ENCODE measurements at regions of chr5 and their contacts with region 1.

Region 1: GRCh38 chr5:76256116-76256889 is 146.8 kb upstream of the IQGAP2 start:
- DNase-seq: peak; percentile 55 to 70 (median 64)
- H3K4me3 ChIP-seq: no peak overlapping the region
- H3K4me3 Mint-ChIP-seq: peak overlapping the region in 4 of 8 donors; percentile 17 to 70 (median 36)
- H3K27ac ChIP-seq: no peak overlapping the region
- H3K27ac Mint-ChIP-seq: peak overlapping the region in 1 of 7 donors; percentile 14
- H3K4me1 ChIP-seq: peaks cover 4% of the 10 kb centered on the region
- H3K4me1 Mint-ChIP-seq: peaks cover 6 to 9% (median 7%) of the 10 kb centered on the region in 4 donors
- H3K27me3 ChIP-seq: no peaks in the 10 kb centered on the region
- H3K27me3 Mint-ChIP-seq: peaks cover 0 to 6% of the 10 kb centered on the region in 2 donors

Region 2: DNA sequence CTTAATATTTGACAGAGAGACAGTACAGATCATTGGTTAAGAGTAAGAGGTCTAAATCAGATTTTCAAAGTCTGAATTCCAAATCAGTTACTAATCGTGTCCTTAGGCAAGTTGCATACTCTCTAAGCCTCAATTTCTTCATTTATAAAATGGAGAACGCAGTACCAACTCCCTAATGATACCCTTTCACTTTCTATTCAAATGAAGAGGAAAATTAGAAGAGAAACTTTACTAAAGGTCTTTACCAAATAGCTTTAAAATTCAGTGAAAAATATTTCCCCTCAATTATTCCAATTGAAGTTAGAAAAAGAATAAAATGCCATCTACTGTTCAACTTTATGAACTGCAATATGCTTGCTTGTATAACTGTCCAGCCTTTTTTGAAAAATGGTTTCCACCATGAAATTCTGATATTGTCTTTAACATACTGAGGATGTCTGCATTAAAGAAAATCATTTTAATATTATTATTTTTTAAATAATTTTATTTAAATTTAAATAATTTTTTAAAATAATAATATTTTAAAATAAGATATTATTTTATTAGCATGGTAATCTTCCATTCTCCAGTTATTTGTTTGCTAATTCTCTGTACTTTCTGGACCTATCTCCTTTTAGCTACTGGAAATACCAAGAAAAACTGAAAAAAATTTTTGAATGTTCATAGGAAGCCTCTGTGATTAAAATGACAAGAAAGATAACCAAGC is 575.0 kb before region 1 on chr5:
- CTCF ChIA-PET with region 1: no interaction called
- POLR2A ChIA-PET with region 1: no interaction called
- intact Hi-C with region 1: loop called (anchors 5 kb)
- DNase-seq: peak in 4 of 5 donors; percentile 26 to 39 (median 34)
- H3K4me3 ChIP-seq: no peak overlapping the region
- H3K4me3 Mint-ChIP-seq: no peak overlapping the region
- H3K27ac ChIP-seq: no peak overlapping the region
- H3K27ac Mint-ChIP-seq: peak overlapping the region in 1 of 7 donors; percentile 29
- H3K4me1 ChIP-seq: peaks cover 5% of the 10 kb centered on the region
- H3K4me1 Mint-ChIP-seq: peaks cover 5 to 11% (median 9%) of the 10 kb centered on the region in 4 donors
- H3K27me3 ChIP-seq: no peaks in the 10 kb centered on the region
- H3K27me3 Mint-ChIP-seq: no peaks in the 10 kb centered on the region

Region 3: DNA sequence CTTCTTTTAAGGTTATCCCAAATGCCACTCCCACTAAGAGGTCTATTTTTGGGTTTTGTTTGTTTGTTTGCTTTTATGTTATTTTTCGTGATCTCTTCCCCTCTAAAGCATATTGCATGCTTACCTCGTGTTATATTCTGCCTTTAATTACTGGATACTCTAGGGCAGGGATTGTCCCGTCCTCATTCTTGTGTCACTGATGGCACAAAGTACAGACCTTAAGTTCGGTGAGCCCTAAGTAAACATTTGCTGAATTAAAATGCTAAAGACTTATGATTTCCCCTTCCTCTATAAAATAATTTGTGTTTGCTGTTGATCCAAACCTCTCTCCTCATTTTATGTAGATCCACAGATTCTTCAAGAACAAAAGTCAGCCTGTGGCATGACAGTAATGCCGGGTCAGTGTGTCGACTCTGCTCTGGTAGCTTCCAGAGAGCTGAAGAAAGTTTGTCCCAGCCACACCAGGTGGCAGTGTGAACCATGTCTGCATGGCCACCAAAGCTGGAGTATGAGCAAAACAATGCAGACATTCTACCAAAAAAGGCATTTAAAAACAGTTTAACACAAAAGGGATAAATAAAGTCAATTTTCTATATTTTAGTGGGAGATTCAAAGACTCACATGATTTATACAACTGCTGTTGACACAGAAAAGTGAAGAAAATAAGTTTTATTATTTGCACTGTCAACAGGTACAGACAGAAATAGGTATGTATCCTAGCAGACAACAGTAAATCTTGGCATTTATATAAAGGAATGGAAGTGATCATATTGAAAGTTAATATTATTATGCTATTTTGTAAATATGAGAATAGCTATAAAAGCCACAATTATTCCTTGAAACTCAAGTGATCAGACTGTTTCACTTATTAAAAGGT is 521.2 kb before region 1 on chr5:
- CTCF ChIA-PET with region 1: interaction called, 5 read pairs
- POLR2A ChIA-PET with region 1: no interaction called
- intact Hi-C with region 1: loop called (anchors 1 kb)
- DNase-seq: peak in 2 of 5 donors; percentile 16
- H3K4me3 ChIP-seq: no peak overlapping the region
- H3K4me3 Mint-ChIP-seq: no peak overlapping the region
- H3K27ac ChIP-seq: no peak overlapping the region
- H3K27ac Mint-ChIP-seq: no peak overlapping the region
- H3K4me1 ChIP-seq: no peaks in the 10 kb centered on the region
- H3K4me1 Mint-ChIP-seq: no peaks in the 10 kb centered on the region
- H3K27me3 ChIP-seq: no peaks in the 10 kb centered on the region
- H3K27me3 Mint-ChIP-seq: peaks cover 5 to 10% of the 10 kb centered on the region in 2 donors

Region 4: GRCh38 chr5:76016258-76016657 is 240.0 kb before region 1 on chr5:
- CTCF ChIA-PET with region 1: interaction called, 4 read pairs
- POLR2A ChIA-PET with region 1: no interaction called
- intact Hi-C with region 1: loop called (anchors 1 kb)
- DNase-seq: peak in 1 of 5 donors; percentile 13
- H3K4me3 ChIP-seq: no peak overlapping the region
- H3K4me3 Mint-ChIP-seq: no peak overlapping the region
- H3K27ac ChIP-seq: no peak overlapping the region
- H3K27ac Mint-ChIP-seq: no peak overlapping the region
- H3K4me1 ChIP-seq: no peaks in the 10 kb centered on the region
- H3K4me1 Mint-ChIP-seq: no peaks in the 10 kb centered on the region
- H3K27me3 ChIP-seq: no peaks in the 10 kb centered on the region
- H3K27me3 Mint-ChIP-seq: peaks cover 16 to 22% of the 10 kb centered on the region in 2 donors

Region 5: DNA sequence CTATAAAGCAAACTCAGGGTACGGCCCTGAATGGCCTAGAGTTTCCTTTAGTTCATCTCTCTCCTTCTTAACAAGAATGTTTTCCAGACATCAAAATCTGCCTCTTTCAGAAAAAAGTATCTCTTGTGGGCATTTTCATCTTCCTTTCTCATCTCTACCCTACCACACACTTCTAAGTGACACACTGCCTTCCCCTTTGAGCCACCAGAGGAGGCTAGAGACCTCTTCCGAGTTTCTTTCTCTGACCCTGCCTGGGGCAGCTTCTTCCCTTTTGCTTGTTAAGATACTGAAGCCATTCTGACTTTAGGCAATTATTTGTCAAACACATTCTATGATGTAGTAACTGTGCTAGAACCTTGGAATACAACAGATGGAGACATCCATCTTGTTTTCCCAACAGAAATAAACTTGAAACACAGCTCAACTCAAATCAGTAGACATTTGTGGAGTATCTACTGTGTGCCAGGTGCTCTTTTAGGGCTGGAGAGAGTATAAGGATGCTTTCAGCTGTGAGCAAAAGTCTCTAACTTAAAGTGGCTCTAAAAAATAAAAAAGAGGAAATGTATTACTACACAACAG is 181.7 kb before region 1 on chr5:
- CTCF ChIA-PET with region 1: interaction called, 5 read pairs
- POLR2A ChIA-PET with region 1: no interaction called
- intact Hi-C with region 1: loop called (anchors 1 kb)
- DNase-seq: peak in 3 of 5 donors; percentile 22 to 31 (median 24)
- H3K4me3 ChIP-seq: no peak overlapping the region
- H3K4me3 Mint-ChIP-seq: no peak overlapping the region
- H3K27ac ChIP-seq: no peak overlapping the region
- H3K27ac Mint-ChIP-seq: no peak overlapping the region
- H3K4me1 ChIP-seq: no peaks in the 10 kb centered on the region
- H3K4me1 Mint-ChIP-seq: no peaks in the 10 kb centered on the region
- H3K27me3 ChIP-seq: no peaks in the 10 kb centered on the region
- H3K27me3 Mint-ChIP-seq: peaks cover 18 to 53% of the 10 kb centered on the region in 2 donors

Region 6: DNA sequence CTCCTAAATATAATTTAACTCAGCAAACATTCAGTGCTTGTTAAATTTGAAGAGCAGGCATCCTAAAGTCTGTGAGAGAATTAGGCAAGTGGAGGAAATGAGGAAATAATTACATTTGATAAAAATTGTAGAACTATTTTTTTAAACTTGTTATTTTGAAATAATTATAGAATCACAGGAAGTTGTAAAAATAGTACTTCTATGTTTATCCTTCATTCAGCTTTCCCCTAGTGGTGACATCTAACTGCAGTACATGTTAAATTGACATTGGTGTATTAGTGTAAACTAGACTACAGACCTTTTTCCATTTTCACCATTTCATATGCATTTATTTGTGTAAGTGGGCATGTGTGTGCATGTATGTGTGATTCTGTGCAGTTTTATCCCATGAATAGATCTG is 315.3 kb after region 1 on chr5:
- CTCF ChIA-PET with region 1: no interaction called
- POLR2A ChIA-PET with region 1: no interaction called
- intact Hi-C with region 1: no loop called
- DNase-seq: no peak
- H3K4me3 ChIP-seq: no peak overlapping the region
- H3K4me3 Mint-ChIP-seq: no peak overlapping the region
- H3K27ac ChIP-seq: no peak overlapping the region
- H3K27ac Mint-ChIP-seq: peak overlapping the region in 5 of 7 donors; percentile 2 to 75 (median 37)
- H3K4me1 ChIP-seq: peaks cover 4% of the 10 kb centered on the region
- H3K4me1 Mint-ChIP-seq: peaks cover 17 to 22% (median 20%) of the 10 kb centered on the region in 4 donors
- H3K27me3 ChIP-seq: no peaks in the 10 kb centered on the region
- H3K27me3 Mint-ChIP-seq: no peaks in the 10 kb centered on the region

Measured in CD4-positive, alpha-beta memory T cell (primary cell).